ENCODE measurements at regions of chr3 and their contacts with region 1.

Region 1: DNA sequence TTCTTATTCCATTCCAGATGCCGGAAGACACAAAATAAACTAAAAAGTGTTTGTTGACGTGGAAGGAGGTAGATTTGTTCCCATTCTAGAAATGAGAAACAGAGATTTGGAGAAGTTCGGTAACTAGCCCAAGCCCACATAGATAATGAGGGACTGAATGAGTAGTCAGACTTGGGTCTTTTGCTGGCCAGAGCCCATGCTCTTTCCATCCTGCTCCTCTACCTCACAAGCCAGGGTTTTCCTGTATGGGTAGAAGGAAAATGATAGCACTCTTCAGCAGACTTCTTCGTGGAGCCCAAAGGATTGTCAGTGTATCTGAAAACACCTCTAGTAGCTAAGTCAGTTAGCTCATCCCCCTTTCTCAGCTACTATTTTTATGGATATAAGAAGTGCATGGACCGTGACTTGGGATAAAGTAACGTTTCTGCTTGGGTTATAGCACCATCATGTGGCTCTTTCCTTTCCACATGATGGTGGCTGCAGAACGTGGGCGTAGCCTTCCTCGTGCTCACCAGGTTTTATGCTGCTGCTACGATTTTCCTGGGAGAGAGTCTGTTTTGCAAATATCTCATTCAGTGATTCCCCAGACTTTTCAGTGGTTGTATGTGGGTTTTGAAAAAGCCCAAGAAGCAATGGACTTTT is 84.6 kb downstream of the DGKG start:
- DNase-seq: peak in 1 of 2 experiments; percentile 25
- H3K4me3 ChIP-seq: no peak overlapping the region
- H3K4me3 Mint-ChIP-seq: no peak overlapping the region
- H3K27ac Mint-ChIP-seq: no peak overlapping the region
- H3K4me1 ChIP-seq: no peaks in the 10 kb centered on the region
- H3K4me1 Mint-ChIP-seq: no peaks in the 10 kb centered on the region
- H3K27me3 ChIP-seq: no peaks in the 10 kb centered on the region
- H3K27me3 Mint-ChIP-seq: peaks cover 4% of the 10 kb centered on the region
- CTCF ChIP-seq: peak; percentile 27 to 44

Region 2: GRCh38 chr3:185942907-185943759 is 334.3 kb before region 1 on chr3:
- CTCF ChIA-PET with region 1: interaction called, 10 read pairs
- POLR2A ChIA-PET with region 1: no interaction called
- intact Hi-C with region 1: no loop called
- DNase-seq: peak; percentile 87 to 88
- H3K4me3 ChIP-seq: no peak overlapping the region
- H3K4me3 Mint-ChIP-seq: no peak overlapping the region
- H3K27ac Mint-ChIP-seq: peak overlapping the region; percentile 13
- H3K4me1 ChIP-seq: peaks cover 15% of the 10 kb centered on the region
- H3K4me1 Mint-ChIP-seq: peaks cover 20% of the 10 kb centered on the region
- H3K27me3 ChIP-seq: no peaks in the 10 kb centered on the region
- H3K27me3 Mint-ChIP-seq: no peaks in the 10 kb centered on the region
- CTCF ChIP-seq: peak; percentile 92 to 97

Region 3: GRCh38 chr3:185976977-185977678 is 300.3 kb before region 1 on chr3:
- CTCF ChIA-PET with region 1: no interaction called
- POLR2A ChIA-PET with region 1: no interaction called
- intact Hi-C with region 1: loop called (anchors 2 kb)
- DNase-seq: peak; percentile 65 to 77
- H3K4me3 ChIP-seq: no peak overlapping the region
- H3K4me3 Mint-ChIP-seq: no peak overlapping the region
- H3K27ac Mint-ChIP-seq: no peak overlapping the region
- H3K4me1 ChIP-seq: no peaks in the 10 kb centered on the region
- H3K4me1 Mint-ChIP-seq: no peaks in the 10 kb centered on the region
- H3K27me3 ChIP-seq: no peaks in the 10 kb centered on the region
- H3K27me3 Mint-ChIP-seq: no peaks in the 10 kb centered on the region
- CTCF ChIP-seq: peak; percentile 86 to 89

Region 4: GRCh38 chr3:186540221-186540834 is 262.9 kb after region 1 on chr3:
- CTCF ChIA-PET with region 1: interaction called, 3 read pairs
- POLR2A ChIA-PET with region 1: no interaction called
- intact Hi-C with region 1: loop called (anchors 1 kb)
- DNase-seq: peak; percentile 66 to 76
- H3K4me3 ChIP-seq: no peak overlapping the region
- H3K4me3 Mint-ChIP-seq: no peak overlapping the region
- H3K27ac Mint-ChIP-seq: no peak overlapping the region
- H3K4me1 ChIP-seq: no peaks in the 10 kb centered on the region
- H3K4me1 Mint-ChIP-seq: peaks cover 9% of the 10 kb centered on the region
- H3K27me3 ChIP-seq: no peaks in the 10 kb centered on the region
- H3K27me3 Mint-ChIP-seq: no peaks in the 10 kb centered on the region
- CTCF ChIP-seq: peak; percentile 67